Common myeloid progenitor, CD34-positive (primary cell): ENCODE measurements at regions of chr10 and their contacts with region 1.

Region 1: GRCh38 chr10:14543046-14543903 is 212.6 kb upstream of the FRMD4A start:
- DNase-seq: peak; percentile 50 to 75 (median 75)
- H3K4me3 ChIP-seq: peak overlapping the region in 6 of 7 experiments; percentile 7 to 66 (median 40)
- H3K27ac ChIP-seq: no peak overlapping the region
- H3K4me1 ChIP-seq: peaks cover 13 to 53% (median 23%) of the 10 kb centered on the region in 4 experiments
- H3K27me3 ChIP-seq: peaks cover 0 to 60% (median 20%) of the 10 kb centered on the region in 5 experiments

Region 2: DNA sequence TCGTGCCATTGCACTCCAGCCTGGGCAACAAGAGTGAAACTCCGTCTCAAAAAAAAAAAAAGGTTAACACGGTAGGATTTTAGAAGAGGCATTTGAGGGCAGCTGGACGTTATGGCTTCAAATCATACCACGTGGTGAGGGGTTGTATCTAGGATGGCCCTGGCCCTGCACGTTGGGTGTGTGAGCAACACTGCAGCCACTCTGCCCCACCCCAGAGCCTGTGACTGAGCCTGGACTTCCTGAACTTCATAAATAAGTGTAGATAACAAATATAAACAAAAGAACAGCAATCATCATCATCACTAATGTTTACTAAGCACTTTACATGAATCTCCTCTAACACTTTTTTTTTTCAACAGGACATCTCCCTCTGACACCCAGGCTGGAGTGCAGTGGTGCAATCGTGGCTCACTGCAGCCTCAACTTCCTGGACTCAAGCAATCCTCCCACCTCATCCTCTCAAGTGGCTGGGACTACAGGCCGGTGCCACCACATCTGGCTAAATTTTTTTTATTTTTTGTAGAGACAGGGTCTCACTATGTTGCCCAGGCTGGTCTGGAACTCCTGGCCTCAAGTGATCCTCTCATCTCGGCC is 43.0 kb before region 1 on chr10:
- CTCF ChIA-PET with region 1: interaction called, 11 read pairs
- POLR2A ChIA-PET with region 1: no interaction called
- DNase-seq: no peak
- H3K4me3 ChIP-seq: no peak overlapping the region
- H3K27ac ChIP-seq: no peak overlapping the region
- H3K4me1 ChIP-seq: no peaks in the 10 kb centered on the region
- H3K27me3 ChIP-seq: peaks cover 0 to 49% (median 11%) of the 10 kb centered on the region in 5 experiments

Region 3: GRCh38 chr10:14553448-14553847 is 10.2 kb after region 1 on chr10:
- CTCF ChIA-PET with region 1: interaction called, 18 read pairs
- POLR2A ChIA-PET with region 1: interaction called, 3 read pairs
- DNase-seq: peak in 2 of 3 donors; percentile 21 to 46
- H3K4me3 ChIP-seq: no peak overlapping the region
- H3K27ac ChIP-seq: no peak overlapping the region
- H3K4me1 ChIP-seq: peaks cover 18 to 58% (median 24%) of the 10 kb centered on the region in 4 experiments
- H3K27me3 ChIP-seq: peaks cover 0 to 22% (median 0%) of the 10 kb centered on the region in 5 experiments

Region 4: DNA sequence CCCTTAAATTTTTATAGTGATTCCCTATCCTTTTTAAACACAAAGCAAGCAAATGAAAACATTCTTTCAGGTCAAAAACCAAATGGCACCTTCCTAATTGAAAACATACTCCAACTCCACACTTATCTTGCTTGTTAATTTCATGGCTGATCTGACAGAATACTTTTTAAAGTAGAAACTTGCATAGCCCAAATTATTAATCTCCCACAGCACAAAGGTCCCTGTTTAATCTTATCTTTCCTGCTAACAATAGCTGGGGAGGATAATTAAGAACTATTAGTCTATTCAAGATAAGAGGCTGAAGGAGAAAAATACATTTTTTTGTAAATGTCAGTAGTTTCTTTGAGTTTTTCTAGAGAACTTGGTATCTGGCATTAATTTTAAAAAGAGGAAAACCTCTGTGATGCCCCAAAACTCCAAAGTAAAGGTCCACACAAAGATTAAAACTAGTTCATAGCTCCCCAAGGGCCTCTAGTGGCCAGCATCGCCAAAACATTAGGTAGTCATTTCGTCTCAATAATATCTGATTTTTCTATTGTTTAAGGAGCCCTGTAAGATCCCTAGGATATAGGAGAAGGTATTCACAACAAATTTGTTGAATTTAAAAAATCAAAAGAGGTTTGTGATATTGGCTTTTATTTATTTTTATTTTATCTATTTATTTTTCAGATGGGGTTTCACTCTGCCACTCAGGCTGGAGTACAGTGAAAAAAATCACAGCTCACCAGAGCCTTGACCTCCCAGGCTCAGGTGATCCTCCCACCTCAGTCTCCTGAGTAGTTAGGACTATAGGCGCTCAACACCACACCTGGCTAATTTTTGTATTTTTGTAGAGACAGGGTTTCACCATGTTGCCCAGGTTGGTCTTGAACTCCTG is 279.8 kb after region 1 on chr10:
- CTCF ChIA-PET with region 1: interaction called, 14 read pairs
- POLR2A ChIA-PET with region 1: no interaction called
- DNase-seq: peak; percentile 29 to 65 (median 59)
- H3K4me3 ChIP-seq: no peak overlapping the region
- H3K27ac ChIP-seq: no peak overlapping the region
- H3K4me1 ChIP-seq: peaks cover 0 to 12% (median 0%) of the 10 kb centered on the region in 4 experiments
- H3K27me3 ChIP-seq: no peaks in the 10 kb centered on the region